ENCODE measurements at regions of chr12 and their contacts with region 1.

Region 1: DNA sequence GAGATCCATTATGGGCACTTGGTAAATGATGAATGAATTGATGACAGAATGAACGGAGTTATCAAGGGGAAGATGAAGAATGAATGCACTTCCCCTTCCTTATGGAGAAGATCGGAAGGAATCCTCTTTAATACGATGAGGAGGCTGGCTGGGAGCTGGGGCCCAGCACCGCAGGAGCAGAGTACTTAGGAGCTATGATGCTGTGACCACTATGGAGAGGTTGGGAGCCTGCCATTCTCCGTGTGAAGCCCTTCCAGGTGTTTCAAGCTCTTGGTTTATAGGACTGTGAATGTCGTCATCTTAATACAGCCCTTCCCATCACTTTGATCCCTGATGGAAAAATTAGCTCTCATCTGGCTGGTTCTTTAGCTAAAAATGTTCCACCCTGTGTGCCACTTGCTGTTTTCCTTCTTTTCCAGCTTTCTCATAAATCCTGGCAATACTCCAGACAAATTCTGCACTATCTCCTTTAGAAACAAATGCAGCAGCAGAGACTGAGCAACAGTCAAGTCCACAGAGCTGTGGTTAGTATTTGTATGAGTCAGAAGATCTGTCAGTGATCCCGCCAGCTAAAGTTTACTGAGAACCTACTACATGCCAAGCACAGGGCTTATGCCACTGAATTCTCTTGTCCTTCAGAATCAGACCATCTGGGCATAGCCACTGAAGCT is 263.1 kb upstream of the CRY1 start:
- DNase-seq: no peak
- H3K4me3 Mint-ChIP-seq: no peak overlapping the region
- H3K27ac Mint-ChIP-seq: no peak overlapping the region
- H3K4me1 Mint-ChIP-seq: peaks cover 34% of the 10 kb centered on the region
- H3K27me3 Mint-ChIP-seq: no peaks in the 10 kb centered on the region

Region 2: GRCh38 chr12:107328442-107329133 is 27.8 kb before region 1 on chr12:
- CTCF ChIA-PET with region 1: no interaction called
- POLR2A ChIA-PET with region 1: no interaction called
- intact Hi-C with region 1: loop called (anchors 2 kb)
- DNase-seq: peak; percentile 51
- H3K4me3 Mint-ChIP-seq: no peak overlapping the region
- H3K27ac Mint-ChIP-seq: no peak overlapping the region
- H3K4me1 Mint-ChIP-seq: peaks cover 63% of the 10 kb centered on the region
- H3K27me3 Mint-ChIP-seq: no peaks in the 10 kb centered on the region

Measured in activated CD4-positive, alpha-beta memory T cell treated with anti-CD3 and anti-CD28 coated beads for 36 hours (primary cell).